ENCODE measurements at regions of chr4 and their contacts with region 1.

Region 1: DNA sequence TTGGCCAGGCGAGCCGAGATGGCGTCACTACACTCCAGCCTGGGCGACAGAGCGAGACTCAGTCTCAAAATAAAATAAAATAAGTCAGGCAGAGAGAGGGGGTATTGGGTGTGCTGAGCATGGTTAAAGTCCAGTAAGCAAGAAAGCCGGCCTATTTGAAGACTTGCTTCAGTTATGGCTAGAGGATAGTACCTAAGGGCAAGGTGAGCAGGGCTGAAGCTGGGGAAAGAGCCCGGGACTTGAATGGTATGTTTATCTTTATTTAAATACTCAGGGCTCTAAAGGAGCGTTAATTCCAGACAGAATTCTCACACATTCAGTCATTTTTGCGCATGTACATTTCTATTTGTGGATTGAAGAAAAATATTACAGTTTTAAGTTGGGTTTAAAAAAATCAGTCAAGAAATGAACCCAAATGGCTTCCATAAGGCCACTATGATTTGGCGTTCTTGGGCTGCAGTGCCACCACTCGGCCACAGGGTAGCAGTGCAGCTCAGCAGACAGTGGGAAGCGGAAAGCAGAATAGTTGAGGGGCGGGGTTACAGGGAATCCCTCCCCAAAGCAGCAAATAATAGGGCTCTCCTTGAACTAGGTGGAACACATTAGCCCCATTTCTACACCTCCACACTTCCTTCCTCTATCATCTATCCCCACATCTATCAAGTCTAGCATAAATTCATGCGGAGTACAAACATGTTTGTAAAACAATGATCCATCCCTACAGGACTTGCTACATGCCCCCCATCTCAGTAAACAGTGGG is 37.2 kb upstream of the SH3D19 start:
- DNase-seq: peak; percentile 76
- ATAC-seq: peak; percentile 99
- H3K4me3 ChIP-seq: no peak overlapping the region
- H3K27ac ChIP-seq: no peak overlapping the region
- H3K4me1 ChIP-seq: peaks cover 0 to 8% of the 10 kb centered on the region in 2 experiments; a peak in 2 of 4 replicates
- H3K27me3 ChIP-seq: no peaks in the 10 kb centered on the region
- CTCF ChIP-seq: peak; percentile 92 to 99 (median 98)
- POLR2A ChIP-seq: no peak
- RAD21 ChIP-seq: peak; percentile 98

Region 2: DNA sequence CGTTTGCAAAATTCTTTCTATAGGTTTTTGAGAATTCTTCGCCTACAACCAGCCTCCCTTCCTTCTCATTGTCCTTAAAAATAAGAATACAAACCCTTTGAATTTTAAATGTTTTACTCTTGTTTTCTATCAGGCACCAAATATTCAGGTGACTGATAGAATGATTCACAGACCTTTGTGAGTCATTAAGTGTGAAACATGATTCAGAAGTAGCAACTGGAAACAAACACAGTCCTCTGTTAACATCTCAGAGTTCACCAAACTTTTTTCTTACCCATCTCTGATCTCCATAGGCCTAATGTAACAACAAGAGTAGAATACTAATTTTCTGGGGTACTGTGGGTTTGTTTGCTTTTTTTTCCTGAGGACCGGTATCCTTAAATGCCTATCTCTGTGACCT is 844.0 kb before region 1 on chr4:
- CTCF ChIA-PET with region 1: no interaction called
- POLR2A ChIA-PET with region 1: no interaction called
- RAD21 ChIA-PET with region 1: no interaction called
- intact Hi-C with region 1: no loop called
- DNase-seq: peak; percentile 37
- ATAC-seq: peak; percentile 80
- H3K4me3 ChIP-seq: no peak overlapping the region
- H3K27ac ChIP-seq: no peak overlapping the region
- H3K4me1 ChIP-seq: peaks cover 7 to 23% of the 10 kb centered on the region in 2 experiments; a peak in 3 of 4 replicates
- H3K27me3 ChIP-seq: no peaks in the 10 kb centered on the region
- CTCF ChIP-seq: no peak
- POLR2A ChIP-seq: no peak
- RAD21 ChIP-seq: no peak

Region 3: DNA sequence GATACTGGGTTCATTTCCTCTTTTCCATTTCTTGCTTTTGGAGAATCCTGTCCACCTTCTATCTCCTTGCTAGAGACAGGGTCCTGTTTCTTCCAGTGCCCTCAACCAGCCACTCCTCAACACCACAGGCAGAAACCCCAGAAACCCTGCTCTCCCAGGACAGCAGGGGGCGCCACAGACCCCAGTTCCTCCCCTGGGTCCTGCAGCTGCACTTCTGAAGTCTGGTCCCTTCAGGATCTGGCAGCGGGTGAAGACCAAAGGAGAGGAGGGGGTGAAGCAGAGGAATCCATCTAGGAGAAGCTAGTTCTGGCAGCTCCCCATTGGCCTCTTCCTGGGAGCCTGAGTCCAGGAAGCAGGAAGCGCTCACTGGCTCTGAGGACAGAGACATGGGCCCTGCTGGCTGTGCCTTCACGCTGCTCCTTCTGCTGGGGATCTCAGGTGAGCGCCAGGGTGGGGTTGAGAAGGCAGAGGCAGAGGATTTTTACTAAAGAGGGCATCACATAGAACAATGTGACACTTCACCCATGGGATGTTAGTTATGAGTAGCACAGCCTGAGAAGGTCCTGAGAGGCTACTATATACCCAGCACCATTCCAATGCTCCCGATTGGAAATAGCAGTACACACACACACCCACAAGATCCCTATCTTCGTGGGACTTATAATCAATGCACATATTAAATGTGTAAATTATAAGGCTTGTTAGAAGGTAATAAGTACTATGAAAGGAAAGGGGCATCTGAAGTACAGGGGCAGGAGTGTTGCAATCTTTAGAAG is 85.6 kb before region 1 on chr4 and contains the start of gene PRSS48:
- CTCF ChIA-PET with region 1: interaction called, 12 read pairs
- POLR2A ChIA-PET with region 1: no interaction called
- RAD21 ChIA-PET with region 1: interaction called, 3 to 4 read pairs
- intact Hi-C with region 1: loop called (anchors 1 kb)
- DNase-seq: peak; percentile 34
- ATAC-seq: peak; percentile 97
- H3K4me3 ChIP-seq: no peak within 1 kb of the TSS
- H3K27ac ChIP-seq: no peak within 1 kb of the TSS
- H3K4me1 ChIP-seq: peaks cover 0 to 3% of the 10 kb centered on the region in 2 experiments; a peak in 1 of 4 replicates
- H3K27me3 ChIP-seq: no peaks in the 10 kb centered on the region
- CTCF ChIP-seq: peak; percentile 85 to 99 (median 93)
- POLR2A ChIP-seq: no peak
- RAD21 ChIP-seq: peak; percentile 94
- total RNA-seq, gene PRSS48: not detected

Region 4: DNA sequence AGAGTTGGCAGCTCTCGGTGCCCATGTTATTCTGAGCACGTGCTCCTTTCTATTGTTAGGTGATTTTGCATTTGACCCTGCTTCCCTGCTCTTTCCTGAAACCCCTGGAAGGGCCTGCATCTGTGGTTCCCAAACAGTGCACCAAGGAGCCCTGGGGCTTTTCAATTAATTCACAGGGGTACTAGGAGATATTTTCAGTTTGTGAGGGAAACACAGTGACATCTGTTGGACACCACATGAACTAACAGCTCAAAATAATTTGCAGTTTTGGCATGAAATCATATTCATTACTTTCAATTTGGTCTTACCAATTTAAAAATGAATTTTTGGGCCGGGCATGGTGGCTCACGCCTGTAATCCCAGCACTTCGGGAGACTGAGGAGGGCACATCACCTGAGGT is 241.7 kb after region 1 on chr4:
- CTCF ChIA-PET with region 1: interaction called, 6 read pairs
- POLR2A ChIA-PET with region 1: no interaction called
- RAD21 ChIA-PET with region 1: no interaction called
- intact Hi-C with region 1: loop called (anchors 1 kb)
- DNase-seq: no peak
- ATAC-seq: peak; percentile 70
- H3K4me3 ChIP-seq: no peak overlapping the region
- H3K27ac ChIP-seq: no peak overlapping the region
- H3K4me1 ChIP-seq: peaks cover 0 to 3% of the 10 kb centered on the region in 2 experiments; a peak in 1 of 4 replicates
- H3K27me3 ChIP-seq: no peaks in the 10 kb centered on the region
- CTCF ChIP-seq: peak; percentile 40 to 62 (median 45); a peak in 4 of 6 replicates
- POLR2A ChIP-seq: no peak
- RAD21 ChIP-seq: peak; percentile 57; the same call in 1 of the 2 replicates

Region 5: DNA sequence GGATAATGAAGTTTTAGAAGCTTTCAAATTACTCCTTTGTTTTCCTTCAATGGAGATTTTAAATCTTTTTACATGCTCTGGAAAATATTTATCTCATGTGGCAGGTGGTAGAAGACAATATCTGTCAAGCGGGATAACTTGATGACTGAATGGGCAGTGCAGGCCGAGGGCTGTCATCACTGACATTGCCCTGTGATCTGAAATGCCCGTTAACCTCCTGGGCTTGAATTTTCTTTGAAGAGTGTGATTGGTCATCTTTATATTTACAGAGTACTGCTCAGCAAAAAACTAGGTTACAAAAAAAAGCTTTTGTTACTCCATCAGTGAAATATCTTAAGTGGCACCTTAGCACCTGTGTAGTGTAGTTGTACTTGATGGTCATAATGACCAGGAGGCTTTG is 250.7 kb after region 1 on chr4:
- CTCF ChIA-PET with region 1: interaction called, 3 read pairs
- POLR2A ChIA-PET with region 1: no interaction called
- RAD21 ChIA-PET with region 1: no interaction called
- intact Hi-C with region 1: loop called (anchors 2 kb)
- DNase-seq: no peak
- ATAC-seq: no peak
- H3K4me3 ChIP-seq: no peak overlapping the region
- H3K27ac ChIP-seq: no peak overlapping the region
- H3K4me1 ChIP-seq: no peaks in the 10 kb centered on the region
- H3K27me3 ChIP-seq: no peaks in the 10 kb centered on the region
- CTCF ChIP-seq: no peak
- POLR2A ChIP-seq: no peak
- RAD21 ChIP-seq: no peak

Region 6: GRCh38 chr4:151644622-151645021 is 282.0 kb after region 1 on chr4:
- CTCF ChIA-PET with region 1: no interaction called
- POLR2A ChIA-PET with region 1: no interaction called
- RAD21 ChIA-PET with region 1: no interaction called
- intact Hi-C with region 1: loop called (anchors 1 kb)
- DNase-seq: peak; percentile 10
- ATAC-seq: peak; percentile 94
- H3K4me3 ChIP-seq: no peak overlapping the region
- H3K27ac ChIP-seq: no peak overlapping the region
- H3K4me1 ChIP-seq: peaks cover 0 to 4% of the 10 kb centered on the region in 2 experiments; a peak in 1 of 4 replicates
- H3K27me3 ChIP-seq: no peaks in the 10 kb centered on the region
- CTCF ChIP-seq: peak; percentile 47 to 88 (median 88); a peak in 5 of 6 replicates
- POLR2A ChIP-seq: no peak
- RAD21 ChIP-seq: peak; percentile 63

Region 7: DNA sequence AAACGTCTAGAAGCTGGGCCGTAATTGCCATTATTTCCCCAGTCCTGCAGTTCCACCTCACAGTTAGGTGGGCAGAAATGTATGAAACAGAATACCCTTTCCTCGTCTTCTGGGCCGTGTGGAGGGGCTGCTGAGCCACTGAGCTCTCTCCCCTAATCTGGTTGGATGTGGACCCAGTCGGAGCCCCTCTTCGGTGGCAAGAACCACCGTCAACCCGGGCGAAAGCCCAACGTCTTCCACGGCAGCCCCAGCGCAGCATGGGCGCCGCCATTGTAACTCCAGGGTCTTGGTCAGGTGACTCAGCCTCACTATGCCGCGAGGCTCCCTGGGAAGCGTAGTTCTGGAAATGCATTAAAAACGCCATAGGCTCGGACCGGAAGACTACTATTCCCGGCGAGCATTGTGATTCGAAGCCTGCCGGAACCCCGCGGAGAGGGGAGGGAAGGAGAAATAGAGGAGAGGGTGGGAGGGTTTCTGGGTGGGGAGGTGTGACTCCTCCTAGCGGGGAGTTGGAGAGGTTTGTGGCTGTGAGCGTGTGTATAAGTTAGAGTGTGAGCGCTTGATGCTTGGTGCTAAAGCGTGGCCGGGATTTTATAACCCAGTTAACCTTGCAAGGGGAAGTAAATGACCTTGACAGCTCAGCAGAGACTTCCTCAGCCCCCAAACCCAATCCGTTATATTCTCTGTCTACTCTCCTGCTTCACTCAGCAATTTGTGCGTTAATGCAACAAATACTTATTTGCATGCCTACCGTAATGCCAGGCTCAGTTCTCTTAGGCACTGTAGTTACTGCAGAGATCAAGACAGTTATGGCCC is 398.3 kb after region 1 on chr4 and contains the start of gene GATB:
- CTCF ChIA-PET with region 1: no interaction called
- POLR2A ChIA-PET with region 1: no interaction called
- RAD21 ChIA-PET with region 1: no interaction called
- intact Hi-C with region 1: loop called (anchors 10 kb)
- DNase-seq: peak; percentile 96
- ATAC-seq: peak; percentile 98
- H3K4me3 ChIP-seq: peak within 1 kb of the TSS; percentile 87 to 96
- H3K27ac ChIP-seq: peak within 1 kb of the TSS; percentile 48
- H3K4me1 ChIP-seq: peaks cover 7 to 13% of the 10 kb centered on the region in 2 experiments; a peak in 3 of 4 replicates
- H3K27me3 ChIP-seq: no peaks in the 10 kb centered on the region
- CTCF ChIP-seq: peak in 2 of 3 experiments; percentile 38 to 53; a peak in 3 of 6 replicates
- POLR2A ChIP-seq: peak; percentile 51
- RAD21 ChIP-seq: 0 out of 2 replicates have a peak, but pooled peaks have one; percentile 29
- total RNA-seq, gene GATB: 29.3 TPM